Heart left ventricle (tissue), 16 donors: ENCODE measurements at regions of chr16 and their contacts with region 1.

Region 1: GRCh38 chr16:17770103-17770502 is 299.3 kb upstream of the XYLT1 start:
- DNase-seq: no peak
- ATAC-seq: no peak
- H3K4me3 ChIP-seq: no peak overlapping the region
- H3K27ac ChIP-seq: no peak overlapping the region
- H3K4me1 ChIP-seq: no peaks in the 10 kb centered on the region
- H3K27me3 ChIP-seq: no peaks in the 10 kb centered on the region
- CTCF ChIP-seq: no peak
- POLR2A ChIP-seq: no peak

Region 2: GRCh38 chr16:17724242-17724898 is 45.7 kb before region 1 on chr16:
- intact Hi-C with region 1: no loop called
- DNase-seq: no peak
- ATAC-seq: no peak
- H3K4me3 ChIP-seq: no peak overlapping the region
- H3K27ac ChIP-seq: no peak overlapping the region
- H3K4me1 ChIP-seq: no peaks in the 10 kb centered on the region
- H3K27me3 ChIP-seq: no peaks in the 10 kb centered on the region
- CTCF ChIP-seq: no peak
- POLR2A ChIP-seq: no peak

Region 3: GRCh38 chr16:17812771-17813170 is 42.7 kb after region 1 on chr16:
- intact Hi-C with region 1: loop called in 1 of 10 experiments (anchors 2 kb)
- DNase-seq: no peak
- ATAC-seq: no peak
- H3K4me3 ChIP-seq: no peak overlapping the region
- H3K27ac ChIP-seq: no peak overlapping the region
- H3K4me1 ChIP-seq: no peaks in the 10 kb centered on the region
- H3K27me3 ChIP-seq: peaks cover 0 to 4% (median 0%) of the 10 kb centered on the region in 9 donors
- CTCF ChIP-seq: no peak
- POLR2A ChIP-seq: no peak